A549 (cell line): ENCODE measurements at regions of chr7 and their contacts with region 1.

Region 1: DNA sequence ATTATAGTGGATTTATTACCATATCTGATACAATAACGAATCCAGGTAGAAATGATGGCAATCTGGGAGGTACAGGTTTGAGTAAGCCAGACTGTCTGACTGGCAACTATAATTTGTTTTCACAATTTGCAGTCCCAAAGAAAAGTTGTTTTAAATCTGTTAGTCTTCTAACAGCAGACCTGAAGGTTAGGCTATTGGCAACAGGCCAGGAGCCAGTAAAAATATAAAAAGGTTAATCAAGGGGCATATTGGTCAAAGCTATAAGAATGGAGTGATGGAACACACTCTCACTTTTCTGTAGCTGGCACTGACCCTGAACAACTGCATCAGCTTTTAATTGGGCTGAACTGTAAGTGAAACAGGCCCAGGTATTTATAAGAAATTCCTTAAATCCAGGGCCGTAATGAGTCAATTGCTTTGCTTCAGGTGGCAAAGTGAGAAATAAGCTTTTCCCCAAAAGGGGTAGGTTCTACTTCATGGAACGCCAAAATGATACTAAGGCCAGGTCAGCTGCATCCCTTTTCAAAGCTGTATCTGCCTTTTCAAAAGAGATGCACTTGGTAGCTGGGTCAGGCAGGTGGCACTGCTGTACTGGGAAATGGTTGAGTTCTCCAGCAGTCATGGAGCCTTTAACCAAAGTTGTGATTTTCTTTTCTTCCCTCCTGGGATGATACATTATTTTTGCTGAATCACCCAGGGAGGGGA is 7.0 kb upstream of the GPR22 start:
- DNase-seq: peak; percentile 15 to 71
- ATAC-seq: peak; percentile 94 to 99
- H3K4me3 ChIP-seq: no peak overlapping the region
- H3K27ac ChIP-seq: peak overlapping the region in 1 of 2 experiments; percentile 47; a peak in 2 of 6 replicates
- H3K4me1 ChIP-seq: no peaks in the 10 kb centered on the region
- CTCF ChIP-seq: peak; percentile 87
- EP300 ChIP-seq: no peak
- POLR2A ChIP-seq: no peak
- RAD21 ChIP-seq: peak; percentile 89 to 92

Region 2: GRCh38 chr7:107494315-107494751 is 31.4 kb after region 1 on chr7:
- CTCF ChIA-PET with region 1: interaction called, 12 read pairs
- POLR2A ChIA-PET with region 1: no interaction called
- DNase-seq: peak in 1 of 2 experiments; percentile 14
- ATAC-seq: peak in 1 of 2 experiments; percentile 48; a peak in 2 of 6 replicates
- H3K4me3 ChIP-seq: no peak overlapping the region
- H3K27ac ChIP-seq: no peak overlapping the region
- H3K4me1 ChIP-seq: peaks cover 9% of the 10 kb centered on the region
- CTCF ChIP-seq: no peak
- EP300 ChIP-seq: no peak
- POLR2A ChIP-seq: no peak
- RAD21 ChIP-seq: no peak

Region 3: DNA sequence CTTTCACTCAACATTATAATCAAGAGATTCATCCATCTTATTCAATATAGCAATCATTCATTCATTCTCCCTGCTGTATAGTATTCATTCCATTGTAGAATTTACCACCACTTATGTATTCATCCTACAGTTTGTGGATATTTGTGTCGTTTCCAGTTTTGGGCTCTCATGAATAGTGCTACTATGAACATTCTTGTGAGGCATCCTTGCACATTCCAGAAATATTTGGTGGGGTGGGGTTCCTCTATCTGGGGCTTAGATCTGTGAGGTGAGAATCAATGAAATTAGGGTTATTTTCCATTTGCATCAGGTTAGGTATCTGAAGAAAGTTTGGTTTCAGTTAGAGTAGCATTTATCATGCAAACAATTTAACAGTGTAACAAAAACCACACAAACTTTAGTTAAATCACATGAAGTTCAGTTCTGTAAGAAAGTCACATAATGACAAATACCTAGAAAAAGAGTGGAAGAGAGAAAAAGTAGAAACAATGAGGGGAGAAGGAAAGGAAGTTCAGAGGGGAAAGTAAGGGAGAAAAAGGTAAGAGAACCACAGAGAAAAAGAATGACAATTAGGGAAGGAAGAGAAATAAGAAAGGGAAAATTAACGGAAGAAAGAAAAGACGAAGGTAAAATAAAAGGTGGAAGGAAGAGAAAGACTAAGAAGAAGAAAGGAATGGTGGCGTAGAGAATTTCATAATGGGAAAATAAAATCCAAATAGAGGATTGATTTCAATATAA is 255.7 kb after region 1 on chr7:
- CTCF ChIA-PET with region 1: interaction called, 80 read pairs
- POLR2A ChIA-PET with region 1: no interaction called
- DNase-seq: no peak
- ATAC-seq: no peak
- H3K4me3 ChIP-seq: no peak overlapping the region
- H3K27ac ChIP-seq: no peak overlapping the region
- H3K4me1 ChIP-seq: no peaks in the 10 kb centered on the region
- CTCF ChIP-seq: no peak
- EP300 ChIP-seq: no peak
- POLR2A ChIP-seq: no peak
- RAD21 ChIP-seq: no peak

Region 4: GRCh38 chr7:107725151-107725740 is 262.4 kb after region 1 on chr7:
- CTCF ChIA-PET with region 1: interaction called, 80 read pairs
- POLR2A ChIA-PET with region 1: no interaction called
- DNase-seq: peak; percentile 60 to 61
- ATAC-seq: peak in 1 of 2 experiments; percentile 67; a peak in 2 of 6 replicates
- H3K4me3 ChIP-seq: no peak overlapping the region
- H3K27ac ChIP-seq: no peak overlapping the region
- H3K4me1 ChIP-seq: no peaks in the 10 kb centered on the region
- CTCF ChIP-seq: peak; percentile 91
- EP300 ChIP-seq: no peak
- POLR2A ChIP-seq: no peak
- RAD21 ChIP-seq: peak; percentile 73 to 78

Region 5: GRCh38 chr7:107743567-107744344 is 280.9 kb after region 1 on chr7 and contains the start of gene CBLL1:
- CTCF ChIA-PET with region 1: interaction called, 21 read pairs
- POLR2A ChIA-PET with region 1: interaction called, 9 read pairs
- DNase-seq: peak; percentile 89 to 96
- ATAC-seq: peak; percentile 95 to 98
- H3K4me3 ChIP-seq: peak within 1 kb of the TSS; percentile 66
- H3K27ac ChIP-seq: peak within 1 kb of the TSS; percentile 95 to 96
- H3K4me1 ChIP-seq: peaks cover 29% of the 10 kb centered on the region
- CTCF ChIP-seq: peak; percentile 77
- EP300 ChIP-seq: no peak; a peak in 1 of 5 replicates
- POLR2A ChIP-seq: peak; percentile 56
- RAD21 ChIP-seq: peak; percentile 49 to 68
- polyA plus RNA-seq, gene CBLL1: 26.1 and 27.3 TPM in 2 replicates

Region 6: DNA sequence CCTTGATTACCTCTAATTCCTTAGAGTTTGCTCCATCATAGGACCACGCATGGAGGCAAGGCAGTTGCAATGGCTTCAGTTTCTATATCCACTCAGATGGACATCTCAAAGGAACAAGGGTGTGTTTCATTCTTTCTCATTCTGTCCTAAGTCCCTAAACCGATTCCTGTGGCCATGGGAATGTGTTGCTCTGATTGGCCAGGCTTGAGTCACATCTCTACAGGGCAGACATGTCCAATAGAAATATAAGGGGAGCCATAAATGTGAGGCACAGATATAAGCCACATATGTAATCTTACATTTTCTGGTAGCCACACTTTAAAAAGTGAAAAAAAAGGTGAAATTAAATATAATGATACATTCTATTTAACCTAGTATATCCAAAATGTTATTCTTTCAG is 411.2 kb after region 1 on chr7:
- CTCF ChIA-PET with region 1: interaction called, 20 read pairs
- POLR2A ChIA-PET with region 1: no interaction called
- DNase-seq: no peak
- ATAC-seq: peak in 1 of 2 experiments; percentile 25; a peak in 2 of 6 replicates
- H3K4me3 ChIP-seq: no peak overlapping the region
- H3K27ac ChIP-seq: no peak overlapping the region
- H3K4me1 ChIP-seq: no peaks in the 10 kb centered on the region
- CTCF ChIP-seq: no peak
- EP300 ChIP-seq: no peak
- POLR2A ChIP-seq: no peak
- RAD21 ChIP-seq: no peak

Region 7: DNA sequence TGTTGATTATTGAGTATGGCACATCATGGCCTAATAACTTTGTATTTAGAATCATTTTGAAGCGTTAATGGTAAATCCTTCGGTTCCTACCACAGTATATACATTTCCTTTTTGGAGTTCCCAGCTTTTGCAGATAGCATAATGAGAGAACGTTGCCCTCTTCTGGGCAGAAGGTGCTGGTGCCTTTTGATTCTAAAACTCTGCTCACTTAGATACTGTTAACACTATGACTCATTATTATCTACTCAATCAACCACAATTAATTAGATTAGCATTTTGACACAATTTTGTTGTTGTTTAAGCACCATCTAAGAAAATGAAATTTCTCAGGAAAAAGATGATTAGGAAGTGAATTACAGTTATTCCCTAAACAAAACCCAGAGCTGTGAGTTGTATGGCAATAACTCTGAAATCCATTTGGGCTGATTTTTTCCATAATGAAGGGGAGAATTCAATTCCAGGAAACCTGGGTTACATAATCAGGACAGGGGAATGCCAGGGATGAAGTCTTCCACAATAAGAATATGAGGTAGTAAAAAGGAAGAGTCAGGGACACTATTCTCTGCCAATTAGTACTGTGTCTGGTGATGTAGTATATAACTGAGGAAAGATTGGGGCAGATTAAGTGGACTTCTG is 416.6 kb after region 1 on chr7:
- CTCF ChIA-PET with region 1: interaction called, 20 read pairs
- POLR2A ChIA-PET with region 1: no interaction called
- DNase-seq: peak; percentile 56 to 63
- ATAC-seq: peak; percentile 75 to 87; a peak in 5 of 6 replicates
- H3K4me3 ChIP-seq: no peak overlapping the region
- H3K27ac ChIP-seq: no peak overlapping the region
- H3K4me1 ChIP-seq: no peaks in the 10 kb centered on the region
- CTCF ChIP-seq: peak; percentile 83
- EP300 ChIP-seq: no peak
- POLR2A ChIP-seq: no peak
- RAD21 ChIP-seq: peak; percentile 75 to 81

Region 8: GRCh38 chr7:109235316-109235715 is 1772.4 kb after region 1 on chr7:
- CTCF ChIA-PET with region 1: no interaction called
- POLR2A ChIA-PET with region 1: no interaction called
- DNase-seq: no peak
- ATAC-seq: no peak
- H3K4me3 ChIP-seq: no peak overlapping the region
- H3K27ac ChIP-seq: no peak overlapping the region
- H3K4me1 ChIP-seq: no peaks in the 10 kb centered on the region
- CTCF ChIP-seq: no peak
- EP300 ChIP-seq: no peak
- POLR2A ChIP-seq: no peak
- RAD21 ChIP-seq: no peak